Panc1 (cell line): ENCODE measurements at regions of chr3 and their contacts with region 1.

Region 1: GRCh38 chr3:46923559-46924350 is 46.2 kb downstream of the PTH1R start:
- DNase-seq: no peak
- ATAC-seq: peak; percentile 78
- H3K4me3 ChIP-seq: no peak overlapping the region
- H3K27ac ChIP-seq: no peak overlapping the region
- H3K4me1 ChIP-seq: no peaks in the 10 kb centered on the region
- H3K27me3 ChIP-seq: no peaks in the 10 kb centered on the region
- CTCF ChIP-seq: peak; percentile 78

Region 2: DNA sequence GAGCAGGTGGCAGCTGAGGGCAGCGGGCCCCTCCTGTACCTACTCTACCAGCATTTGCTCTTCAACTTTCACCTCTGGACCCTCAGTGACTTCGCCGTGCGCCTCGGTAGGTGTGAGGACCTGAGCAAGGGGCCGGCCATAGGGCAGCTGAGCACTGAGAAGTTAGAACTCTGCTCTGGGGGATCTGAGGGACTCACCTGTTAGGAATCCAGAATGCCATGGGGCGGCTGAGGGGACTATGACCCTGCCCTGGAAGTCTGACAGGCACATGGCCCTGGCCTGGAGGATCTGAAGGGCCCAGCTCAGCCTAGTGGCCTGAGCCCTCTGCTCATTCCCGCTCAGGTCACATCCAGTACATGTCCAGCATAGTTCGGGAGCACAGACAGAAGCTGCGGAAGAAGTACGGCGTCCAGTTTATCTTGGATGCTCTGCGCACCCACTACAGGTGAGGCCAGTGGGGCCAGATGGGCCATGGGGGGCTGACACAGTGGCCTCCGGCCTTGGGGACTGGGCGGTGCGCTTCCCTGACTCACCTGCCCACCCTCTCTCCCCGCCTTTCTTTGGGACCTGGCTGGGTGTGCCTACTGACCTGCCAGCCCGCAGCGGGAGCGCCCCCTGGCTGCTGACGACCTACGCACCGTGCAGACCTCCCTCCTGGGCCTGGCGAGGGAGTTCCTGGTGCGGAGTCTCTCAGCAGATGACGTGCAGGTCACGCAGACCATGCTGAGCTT is 74.5 kb after region 1 on chr3:
- CTCF ChIA-PET with region 1: interaction called, 3 read pairs
- POLR2A ChIA-PET with region 1: no interaction called
- in situ Hi-C with region 1: no loop called
- intact Hi-C with region 1: loop called (anchors 10 kb)
- DNase-seq: no peak
- ATAC-seq: peak; percentile 83
- H3K4me3 ChIP-seq: no peak overlapping the region
- H3K27ac ChIP-seq: no peak overlapping the region
- H3K4me1 ChIP-seq: no peaks in the 10 kb centered on the region
- H3K27me3 ChIP-seq: no peaks in the 10 kb centered on the region
- CTCF ChIP-seq: peak; percentile 90